B cell (primary cell): ENCODE measurements at regions of chr19 and their contacts with region 1.

Region 1: GRCh38 chr19:38877781-38878574 is at the start of gene RINL:
- DNase-seq: peak; percentile 85
- ATAC-seq: peak; percentile 93
- H3K4me3 ChIP-seq: peak within 1 kb of the TSS; percentile 36 to 73 (median 46)
- H3K4me3 Mint-ChIP-seq: peak within 1 kb of the TSS; percentile 94
- H3K27ac ChIP-seq: peak within 1 kb of the TSS; percentile 94 to 98
- H3K27ac Mint-ChIP-seq: peak within 1 kb of the TSS; percentile 100
- H3K4me1 ChIP-seq: peaks cover 31 to 37% of the 10 kb centered on the region in 2 donors
- H3K4me1 Mint-ChIP-seq: peaks cover 41% of the 10 kb centered on the region
- H3K27me3 ChIP-seq: no peaks in the 10 kb centered on the region
- H3K27me3 Mint-ChIP-seq: no peaks in the 10 kb centered on the region
- CTCF ChIP-seq: no peak
- total RNA-seq, gene RINL: 66.2 and 67.0 TPM in 2 replicates

Region 2: GRCh38 chr19:38862321-38863059 is 15.5 kb before region 1 on chr19:
- CTCF ChIA-PET with region 1: interaction called, 13 read pairs
- POLR2A ChIA-PET with region 1: interaction called, 13 read pairs
- intact Hi-C with region 1: loop called (anchors 2 kb)
- DNase-seq: no peak
- ATAC-seq: no peak
- H3K4me3 ChIP-seq: no peak overlapping the region
- H3K4me3 Mint-ChIP-seq: peak overlapping the region; percentile 24
- H3K27ac ChIP-seq: peak overlapping the region; percentile 24 to 55
- H3K27ac Mint-ChIP-seq: peak overlapping the region; percentile 82
- H3K4me1 ChIP-seq: peaks cover 66 to 93% of the 10 kb centered on the region in 2 donors
- H3K4me1 Mint-ChIP-seq: peaks cover 65% of the 10 kb centered on the region
- H3K27me3 ChIP-seq: no peaks in the 10 kb centered on the region
- H3K27me3 Mint-ChIP-seq: no peaks in the 10 kb centered on the region
- CTCF ChIP-seq: no peak

Region 3: DNA sequence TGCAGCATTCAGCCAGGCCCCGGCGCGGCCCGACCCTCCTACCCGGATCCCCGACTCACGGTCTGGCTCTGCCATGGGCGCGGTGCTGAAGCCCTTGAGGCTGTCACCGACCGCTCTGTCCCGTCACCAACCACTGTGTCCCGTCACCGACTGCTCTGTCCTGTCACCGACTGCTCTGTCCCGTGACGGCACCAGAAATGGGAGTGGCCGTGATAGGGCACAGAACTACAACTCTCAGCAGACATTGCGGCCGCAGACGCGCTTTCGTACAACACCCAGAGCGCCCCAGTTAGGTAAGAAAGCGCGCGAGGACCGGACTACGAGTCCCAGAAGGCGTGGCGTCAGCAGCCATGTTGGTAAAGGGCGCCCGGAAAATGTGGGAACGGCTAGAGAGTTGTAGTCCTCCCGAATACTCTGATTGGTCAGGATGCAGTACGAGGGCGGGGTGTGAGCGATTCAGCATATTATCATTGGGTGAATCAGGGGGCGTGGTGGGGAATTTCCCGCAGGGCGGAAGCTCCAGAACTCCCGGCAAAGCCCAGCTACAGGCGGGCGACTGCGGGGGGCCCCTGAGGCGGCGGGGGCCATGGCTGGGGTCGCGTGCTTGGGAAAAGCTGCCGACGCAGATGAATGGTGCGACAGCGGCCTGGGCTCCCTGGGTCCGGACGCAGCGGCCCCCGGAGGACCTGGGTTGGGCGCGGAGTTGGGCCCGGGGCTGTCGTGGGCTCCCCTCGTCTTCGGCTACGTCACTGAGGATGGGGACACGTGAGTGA is 21.7 kb after region 1 on chr19 and contains the starts of genes NFKBIB and SIRT2:
- CTCF ChIA-PET with region 1: no interaction called
- POLR2A ChIA-PET with region 1: interaction called, 5 read pairs
- intact Hi-C with region 1: loop called (anchors 2 kb)
- DNase-seq: peak; percentile 100
- ATAC-seq: peak; percentile 89
- H3K4me3 ChIP-seq: peak within 1 kb of the TSS; percentile 85 to 95 (median 92)
- H3K4me3 Mint-ChIP-seq: peak within 1 kb of the TSS; percentile 96
- H3K27ac ChIP-seq: peak within 1 kb of the TSS; percentile 89 to 99
- H3K27ac Mint-ChIP-seq: peak within 1 kb of the TSS; percentile 94
- H3K4me1 ChIP-seq: peaks cover 20 to 30% of the 10 kb centered on the region in 2 donors
- H3K4me1 Mint-ChIP-seq: peaks cover 38% of the 10 kb centered on the region
- H3K27me3 ChIP-seq: no peaks in the 10 kb centered on the region
- H3K27me3 Mint-ChIP-seq: no peaks in the 10 kb centered on the region
- CTCF ChIP-seq: no peak
- total RNA-seq, gene NFKBIB: 30.3 and 31.5 TPM in 2 replicates
- total RNA-seq, gene SIRT2: 41.8 and 42.4 TPM in 2 replicates